ENCODE measurements at regions of chr3 and their contacts with region 1.

Region 1: GRCh38 chr3:67113802-67114407 is 115.8 kb downstream of the KBTBD8 start:
- DNase-seq: peak; percentile 54 to 61 (median 58)
- ATAC-seq: peak; percentile 55 to 87 (median 80)
- H3K4me3 ChIP-seq: no peak overlapping the region
- H3K27ac ChIP-seq: no peak overlapping the region
- H3K4me1 ChIP-seq: no peaks in the 10 kb centered on the region
- H3K27me3 ChIP-seq: peaks cover 0 to 17% (median 0%) of the 10 kb centered on the region in 9 donors
- CTCF ChIP-seq: peak; percentile 69 to 88 (median 80)
- POLR2A ChIP-seq: no peak

Region 2: DNA sequence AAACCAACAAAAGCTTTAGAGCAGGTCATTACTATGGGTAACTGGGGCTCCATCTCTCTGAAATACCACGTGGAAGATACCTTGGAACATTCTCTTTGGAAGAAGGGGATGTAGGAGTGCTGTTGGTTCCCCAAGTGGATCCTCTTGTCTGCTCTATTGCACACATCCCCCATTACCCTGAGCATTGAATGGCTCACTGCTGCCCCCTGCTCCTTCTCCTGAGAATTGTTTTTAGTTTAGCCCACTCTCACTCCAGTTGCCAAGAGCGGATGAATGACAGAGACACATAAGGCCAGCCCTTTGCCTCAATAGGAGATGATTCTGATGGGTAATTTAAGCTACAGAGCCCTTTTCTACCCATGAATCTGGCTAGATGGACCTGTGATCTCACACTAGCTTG is 676.1 kb after region 1 on chr3:
- intact Hi-C with region 1: loop called in 3 of 10 experiments (anchors 5 to 10 kb)
- DNase-seq: peak in 1 of 5 donors; percentile 18
- ATAC-seq: peak in 2 of 4 donors; percentile 50 to 62
- H3K4me3 ChIP-seq: no peak overlapping the region
- H3K27ac ChIP-seq: no peak overlapping the region
- H3K4me1 ChIP-seq: no peaks in the 10 kb centered on the region
- H3K27me3 ChIP-seq: no peaks in the 10 kb centered on the region
- CTCF ChIP-seq: peak; percentile 27 to 61 (median 51)
- POLR2A ChIP-seq: no peak

Region 3: GRCh38 chr3:67798412-67798811 is 684.5 kb after region 1 on chr3:
- intact Hi-C with region 1: loop called in 3 of 10 experiments (anchors 5 to 10 kb)
- DNase-seq: no peak
- ATAC-seq: no peak
- H3K4me3 ChIP-seq: no peak overlapping the region
- H3K27ac ChIP-seq: no peak overlapping the region
- H3K4me1 ChIP-seq: no peaks in the 10 kb centered on the region
- H3K27me3 ChIP-seq: no peaks in the 10 kb centered on the region
- CTCF ChIP-seq: no peak
- POLR2A ChIP-seq: no peak

Region 4: DNA sequence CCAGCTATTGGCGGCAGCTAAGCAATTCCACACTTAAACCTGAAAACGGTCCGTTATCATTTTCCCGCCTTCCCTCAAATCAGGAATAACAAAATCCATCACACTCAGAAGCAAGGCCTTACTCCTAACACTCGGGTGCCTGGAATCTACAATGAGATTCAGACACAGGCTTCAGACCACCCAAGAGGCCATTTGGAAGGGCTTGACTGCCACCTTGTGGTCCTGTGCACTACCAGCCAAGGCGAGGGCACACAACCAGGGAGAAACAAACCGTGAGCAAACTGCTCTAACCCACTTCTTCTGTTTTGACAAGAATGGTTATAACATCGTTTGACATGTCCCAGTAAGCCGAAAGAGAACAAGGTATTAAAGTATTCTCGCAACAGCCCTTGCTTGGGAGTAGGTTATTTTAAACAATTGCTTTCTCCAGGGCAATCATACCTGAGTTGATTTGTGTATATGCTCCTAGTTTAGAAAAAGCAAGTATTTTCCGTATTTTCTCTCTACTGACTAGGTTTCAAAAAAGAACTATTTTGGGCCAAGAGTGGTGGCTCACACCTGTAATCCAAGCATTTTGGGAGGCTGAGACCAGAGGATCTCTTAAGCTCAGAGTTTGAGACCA is 1858.6 kb after region 1 on chr3:
- intact Hi-C with region 1: loop called in 1 of 10 experiments (anchors 10 kb)
- DNase-seq: peak in 4 of 5 donors; percentile 17 to 54 (median 32)
- ATAC-seq: peak; percentile 47 to 82 (median 68)
- H3K4me3 ChIP-seq: no peak overlapping the region
- H3K27ac ChIP-seq: no peak overlapping the region
- H3K4me1 ChIP-seq: no peaks in the 10 kb centered on the region
- H3K27me3 ChIP-seq: peaks cover 0 to 9% (median 0%) of the 10 kb centered on the region in 9 donors
- CTCF ChIP-seq: peak; percentile 34 to 69 (median 54)
- POLR2A ChIP-seq: no peak